HepG2 (cell line): ENCODE measurements at regions of chr19 and their contacts with region 1.

Region 1: GRCh38 chr19:4267101-4267900 is 11.8 kb upstream of the SHD start:
- DNase-seq: peak; percentile 72
- ATAC-seq: peak; percentile 88
- H3K4me3 ChIP-seq: no peak overlapping the region
- H3K27ac ChIP-seq: peak overlapping the region; percentile 73
- H3K4me1 ChIP-seq: peaks cover 20% of the 10 kb centered on the region
- H3K27me3 ChIP-seq: no peaks in the 10 kb centered on the region
- CTCF ChIP-seq: peak; percentile 90
- EP300 ChIP-seq: no peak
- POLR2A ChIP-seq: no peak
- RAD21 ChIP-seq: peak; percentile 72

Region 2: GRCh38 chr19:4352701-4353121 is 85.4 kb after region 1 on chr19:
- CTCF ChIA-PET with region 1: interaction called, 41 read pairs
- POLR2A ChIA-PET with region 1: interaction called, 8 read pairs
- in situ Hi-C with region 1: loop called (anchors 5 kb)
- intact Hi-C with region 1: loop called (anchors 1 kb)
- DNase-seq: peak; percentile 47
- ATAC-seq: peak; percentile 22; the same call in 2 of the 3 replicates
- H3K4me3 ChIP-seq: no peak overlapping the region
- H3K27ac ChIP-seq: no peak overlapping the region
- H3K4me1 ChIP-seq: no peaks in the 10 kb centered on the region
- H3K27me3 ChIP-seq: no peaks in the 10 kb centered on the region
- CTCF ChIP-seq: peak; percentile 75
- EP300 ChIP-seq: no peak
- POLR2A ChIP-seq: no peak
- RAD21 ChIP-seq: peak; percentile 52